Activated CD4-positive, alpha-beta T cell treated with anti-CD3 and anti-CD28 coated beads, Interleukin-2, amount 10 ng/mL, durations not matched to agents 24 days and 14 days (primary cell): ENCODE measurements at regions of chr19 and their contacts with region 1.

Region 1: DNA sequence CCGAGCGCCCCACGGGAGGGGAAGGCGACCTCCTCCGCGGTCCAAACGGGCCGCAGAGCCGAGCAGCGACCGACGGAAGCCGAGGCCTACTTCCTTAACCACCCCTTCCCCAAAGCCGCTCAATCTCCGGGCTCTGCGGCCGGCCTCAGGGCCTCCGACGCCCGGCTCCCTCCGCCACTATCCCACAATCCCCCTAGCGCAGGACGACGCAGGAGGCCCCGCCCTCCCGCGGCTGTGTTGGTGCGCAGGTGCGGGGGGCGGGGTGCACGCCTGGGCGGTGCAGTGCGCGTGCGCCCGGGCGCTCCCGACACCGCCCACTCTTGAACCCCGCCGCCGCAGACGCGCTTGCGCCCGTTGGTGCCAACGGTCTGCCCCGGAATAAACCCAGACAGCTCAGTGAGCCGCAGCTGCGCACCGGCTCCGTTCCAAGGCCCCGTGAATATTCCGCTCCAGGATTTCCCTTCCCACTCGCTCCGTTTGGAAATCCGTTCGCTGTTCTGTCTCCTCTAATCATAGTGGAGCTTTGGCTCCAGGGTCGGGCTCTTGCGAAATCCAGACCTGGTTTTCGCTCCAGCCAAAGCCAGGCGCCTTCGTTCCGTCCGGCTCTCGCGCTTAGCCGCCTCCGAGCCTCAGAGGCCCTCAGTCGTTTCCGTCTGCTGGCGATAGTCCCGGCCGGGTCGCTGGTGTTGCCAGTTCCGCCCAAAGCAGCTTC is at the start of gene PPP6R1:
- DNase-seq: peak; percentile 98
- H3K4me3 Mint-ChIP-seq: peak within 1 kb of the TSS; percentile 96
- H3K27ac Mint-ChIP-seq: peak within 1 kb of the TSS; percentile 99
- H3K4me1 Mint-ChIP-seq: peaks cover 44% of the 10 kb centered on the region
- H3K27me3 Mint-ChIP-seq: peaks cover 2% of the 10 kb centered on the region
- total RNA-seq, gene PPP6R1: 196 and 216 TPM in 2 replicates

Region 2: GRCh38 chr19:54463531-54464043 is 795.4 kb before region 1 on chr19 and contains the start of gene LENG9:
- intact Hi-C with region 1: loop called (anchors 10 kb)
- DNase-seq: peak; percentile 99
- H3K4me3 Mint-ChIP-seq: peak within 1 kb of the TSS; percentile 87
- H3K27ac Mint-ChIP-seq: peak within 1 kb of the TSS; percentile 90
- H3K4me1 Mint-ChIP-seq: peaks cover 26% of the 10 kb centered on the region
- H3K27me3 Mint-ChIP-seq: peaks cover 16% of the 10 kb centered on the region
- total RNA-seq, gene LENG9: 8.2 and 8.3 TPM in 2 replicates

Region 3: GRCh38 chr19:55141696-55142095 is 117.3 kb before region 1 on chr19:
- intact Hi-C with region 1: no loop called
- DNase-seq: no peak
- H3K4me3 Mint-ChIP-seq: no peak overlapping the region
- H3K27ac Mint-ChIP-seq: no peak overlapping the region
- H3K4me1 Mint-ChIP-seq: peaks cover 10% of the 10 kb centered on the region
- H3K27me3 Mint-ChIP-seq: peaks cover 25% of the 10 kb centered on the region

Region 4: GRCh38 chr19:55166530-55167268 is 92.3 kb before region 1 on chr19 and contains the start of gene DNAAF3:
- intact Hi-C with region 1: loop called (anchors 2 kb)
- DNase-seq: peak; percentile 93
- H3K4me3 Mint-ChIP-seq: peak within 1 kb of the TSS; percentile 84
- H3K27ac Mint-ChIP-seq: peak within 1 kb of the TSS; percentile 13
- H3K4me1 Mint-ChIP-seq: peaks cover 11% of the 10 kb centered on the region
- H3K27me3 Mint-ChIP-seq: peaks cover 55% of the 10 kb centered on the region
- total RNA-seq, gene DNAAF3: not detected in 2 replicates

Region 5: DNA sequence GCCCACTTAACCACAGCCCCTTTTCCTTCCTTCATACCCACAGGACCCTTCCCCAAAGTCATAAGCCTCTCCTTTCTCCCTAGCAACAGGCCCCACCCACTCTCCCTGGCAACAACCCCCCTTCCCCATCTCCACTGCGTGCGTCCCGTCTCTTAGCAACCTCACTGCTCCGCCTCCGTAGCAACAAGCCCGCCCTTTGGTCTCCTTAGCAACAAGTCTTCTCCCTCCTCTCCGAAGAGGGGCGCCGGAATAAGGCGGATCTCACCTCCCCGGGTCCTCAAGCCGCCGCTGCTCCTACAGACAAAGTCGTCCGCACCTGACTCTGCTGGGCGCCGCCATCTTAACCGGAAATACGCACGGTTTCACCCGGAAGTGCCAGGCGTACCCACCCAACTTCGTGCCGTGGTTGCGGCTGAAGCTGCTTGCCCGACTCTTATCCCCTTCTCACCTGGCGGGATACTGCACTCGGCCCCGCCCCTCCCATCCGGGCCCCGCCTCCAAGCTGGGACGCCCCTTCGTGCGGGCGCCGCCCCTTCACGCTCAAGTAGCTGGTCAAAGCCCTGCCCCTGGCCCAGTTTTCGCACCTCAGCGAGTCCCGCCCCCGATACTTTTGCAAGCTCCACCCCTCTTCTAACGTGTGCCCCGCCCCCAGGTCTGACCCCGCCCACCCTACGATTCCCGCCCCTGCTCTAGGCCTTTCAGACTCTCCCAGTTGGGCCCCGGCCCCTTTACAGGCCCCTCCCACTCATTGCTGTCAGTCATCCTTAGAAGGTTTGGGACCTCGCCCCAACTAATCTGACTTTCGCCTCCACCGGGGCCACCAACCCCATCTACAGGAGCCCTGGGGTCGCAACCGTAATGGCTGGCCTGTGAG is 21.0 kb after region 1 on chr19 and contains the start of gene HSPBP1:
- intact Hi-C with region 1: loop called (anchors 1 kb)
- DNase-seq: peak; percentile 98
- H3K4me3 Mint-ChIP-seq: peak within 1 kb of the TSS; percentile 100
- H3K27ac Mint-ChIP-seq: peak within 1 kb of the TSS; percentile 99
- H3K4me1 Mint-ChIP-seq: peaks cover 31% of the 10 kb centered on the region
- H3K27me3 Mint-ChIP-seq: peaks cover 4% of the 10 kb centered on the region
- total RNA-seq, gene HSPBP1: 63.9 and 68.3 TPM in 2 replicates

Region 6: GRCh38 chr19:55385740-55386529 is 127.0 kb after region 1 on chr19 and contains the start of gene RPL28:
- intact Hi-C with region 1: loop called (anchors 1 kb)
- DNase-seq: peak; percentile 100
- H3K4me3 Mint-ChIP-seq: peak within 1 kb of the TSS; percentile 97
- H3K27ac Mint-ChIP-seq: peak within 1 kb of the TSS; percentile 98
- H3K4me1 Mint-ChIP-seq: peaks cover 52% of the 10 kb centered on the region
- H3K27me3 Mint-ChIP-seq: no peaks in the 10 kb centered on the region
- total RNA-seq, gene RPL28: 1,992 and 2,022 TPM in 2 replicates

Region 7: DNA sequence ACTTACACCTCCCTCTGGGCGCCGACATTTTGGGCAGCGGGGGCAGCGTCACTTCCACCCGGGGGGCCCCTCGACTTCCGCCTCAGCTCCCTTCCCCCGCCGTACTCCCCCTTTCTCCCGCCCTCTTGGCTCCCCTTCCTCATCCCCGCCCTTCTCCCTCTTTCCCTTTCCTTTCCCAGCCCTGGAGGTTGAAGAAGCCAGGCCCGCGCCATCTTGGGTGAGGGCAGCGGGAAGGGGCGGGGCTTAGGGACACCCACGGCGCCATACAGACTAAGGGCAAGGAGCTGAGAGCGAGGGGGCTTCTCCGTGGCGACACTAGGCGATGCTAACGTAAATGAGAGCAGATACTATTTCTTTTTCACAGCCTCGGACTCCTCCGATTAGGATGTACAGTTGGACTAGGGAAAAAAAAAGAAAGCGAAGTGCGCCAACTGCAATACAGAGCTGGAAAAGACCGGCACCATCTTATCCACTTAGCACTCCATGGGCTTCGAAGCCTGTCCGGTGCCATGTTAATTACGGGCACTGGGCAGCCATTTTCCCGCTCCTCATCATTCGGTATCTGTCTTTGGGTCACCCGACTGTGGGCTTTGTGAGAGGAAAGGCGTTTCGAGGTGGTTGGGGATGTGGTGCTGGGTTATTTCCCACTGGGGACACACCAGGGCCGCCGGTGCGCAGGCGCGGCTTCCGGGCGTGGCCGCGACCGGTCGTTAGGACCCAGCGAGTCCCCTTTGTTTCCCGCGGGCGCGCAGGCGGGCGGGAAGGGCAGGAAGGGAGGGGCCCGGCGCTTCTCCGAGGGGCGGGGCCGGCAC is 340.7 kb after region 1 on chr19 and contains the start of gene FIZ1:
- intact Hi-C with region 1: loop called (anchors 1 kb)
- DNase-seq: peak; percentile 99
- H3K4me3 Mint-ChIP-seq: peak within 1 kb of the TSS; percentile 88
- H3K27ac Mint-ChIP-seq: peak within 1 kb of the TSS; percentile 98
- H3K4me1 Mint-ChIP-seq: peaks cover 33% of the 10 kb centered on the region
- H3K27me3 Mint-ChIP-seq: no peaks in the 10 kb centered on the region
- total RNA-seq, gene FIZ1: 20.4 and 21.4 TPM in 2 replicates